ENCODE measurements at regions of chr3 and their contacts with region 1.

Region 1: DNA sequence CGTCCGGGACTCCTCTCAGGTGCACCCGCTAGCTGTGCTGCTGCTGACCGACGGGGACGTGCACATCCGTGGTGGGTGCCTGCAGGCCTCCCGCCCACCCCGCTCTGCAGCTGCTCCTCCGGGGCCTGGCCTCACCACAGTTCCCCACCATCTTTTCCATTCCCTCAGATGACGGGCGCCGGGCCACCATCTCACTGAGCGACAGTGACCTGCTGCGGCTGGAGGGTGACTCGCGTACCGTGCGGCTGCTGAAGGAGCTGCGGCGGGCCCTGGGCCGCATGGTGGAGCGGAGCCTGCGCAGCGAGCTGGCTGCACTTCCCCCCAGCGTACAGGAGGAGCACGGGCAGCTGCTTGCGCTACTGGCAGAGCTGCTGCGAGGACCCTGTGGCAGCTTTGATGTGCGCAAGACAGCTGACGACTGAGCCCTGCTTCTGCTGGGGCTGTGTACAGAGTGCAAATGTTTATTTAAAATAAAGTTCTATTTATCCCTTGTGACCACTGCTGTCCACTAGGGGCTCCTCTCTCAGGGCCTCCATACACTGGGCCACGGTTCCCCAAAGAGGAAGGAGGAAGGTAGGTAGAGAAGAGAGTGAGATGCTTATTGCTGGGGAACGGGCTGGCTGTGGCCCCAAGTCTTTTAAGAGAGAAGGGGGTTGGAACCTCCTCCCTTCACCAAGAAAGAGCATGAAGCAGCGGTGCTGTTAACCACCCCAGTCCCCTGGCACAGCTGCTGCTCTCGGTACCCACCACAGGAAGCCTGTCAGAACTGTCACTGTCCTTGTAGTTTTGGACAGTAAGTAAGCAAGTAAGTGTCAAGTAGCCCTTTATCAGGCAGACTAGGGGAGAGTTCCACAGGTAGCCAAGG is 47.0 kb downstream of the DHX30 start:
- DNase-seq: no peak
- ATAC-seq: peak; percentile 34 to 48 (median 41)
- H3K4me3 ChIP-seq: no peak overlapping the region
- H3K27ac ChIP-seq: no peak overlapping the region
- H3K4me1 ChIP-seq: no peaks in the 10 kb centered on the region
- H3K27me3 ChIP-seq: no peaks in the 10 kb centered on the region
- CTCF ChIP-seq: peak in 2 of 4 donors; percentile 31 to 37
- POLR2A ChIP-seq: no peak

Region 2: DNA sequence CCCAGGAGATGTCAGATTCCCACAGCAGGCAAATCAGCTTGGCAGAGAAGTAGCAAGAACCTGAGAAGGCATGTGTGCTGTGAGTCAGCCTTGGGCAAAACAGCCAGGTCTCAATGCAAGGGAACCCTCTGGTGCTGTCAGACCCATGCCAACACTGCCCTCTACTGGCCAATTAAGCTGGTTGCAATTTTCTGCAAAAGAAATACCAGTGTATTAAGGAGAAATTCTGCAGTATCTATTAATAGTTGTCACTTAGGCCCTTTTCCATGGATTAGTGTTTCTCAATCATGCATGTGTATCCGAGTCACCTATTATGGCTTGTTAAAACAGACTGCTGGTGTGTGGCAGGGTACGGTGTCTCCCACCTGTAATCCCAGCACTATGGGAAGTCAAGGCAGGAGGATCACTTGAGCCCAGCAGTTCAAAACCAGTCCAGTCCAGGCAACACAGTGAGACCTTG is 140.1 kb after region 1 on chr3:
- intact Hi-C with region 1: loop called in 1 of 2 experiments (anchors 10 kb)
- DNase-seq: peak in 2 of 3 donors; percentile 64 to 74
- ATAC-seq: peak; percentile 95 to 98 (median 97)
- H3K4me3 ChIP-seq: no peak overlapping the region
- H3K27ac ChIP-seq: no peak overlapping the region
- H3K4me1 ChIP-seq: peaks cover 0 to 11% (median 5%) of the 10 kb centered on the region in 4 donors
- H3K27me3 ChIP-seq: no peaks in the 10 kb centered on the region
- CTCF ChIP-seq: peak; percentile 88 to 93 (median 90)
- POLR2A ChIP-seq: no peak

Region 3: DNA sequence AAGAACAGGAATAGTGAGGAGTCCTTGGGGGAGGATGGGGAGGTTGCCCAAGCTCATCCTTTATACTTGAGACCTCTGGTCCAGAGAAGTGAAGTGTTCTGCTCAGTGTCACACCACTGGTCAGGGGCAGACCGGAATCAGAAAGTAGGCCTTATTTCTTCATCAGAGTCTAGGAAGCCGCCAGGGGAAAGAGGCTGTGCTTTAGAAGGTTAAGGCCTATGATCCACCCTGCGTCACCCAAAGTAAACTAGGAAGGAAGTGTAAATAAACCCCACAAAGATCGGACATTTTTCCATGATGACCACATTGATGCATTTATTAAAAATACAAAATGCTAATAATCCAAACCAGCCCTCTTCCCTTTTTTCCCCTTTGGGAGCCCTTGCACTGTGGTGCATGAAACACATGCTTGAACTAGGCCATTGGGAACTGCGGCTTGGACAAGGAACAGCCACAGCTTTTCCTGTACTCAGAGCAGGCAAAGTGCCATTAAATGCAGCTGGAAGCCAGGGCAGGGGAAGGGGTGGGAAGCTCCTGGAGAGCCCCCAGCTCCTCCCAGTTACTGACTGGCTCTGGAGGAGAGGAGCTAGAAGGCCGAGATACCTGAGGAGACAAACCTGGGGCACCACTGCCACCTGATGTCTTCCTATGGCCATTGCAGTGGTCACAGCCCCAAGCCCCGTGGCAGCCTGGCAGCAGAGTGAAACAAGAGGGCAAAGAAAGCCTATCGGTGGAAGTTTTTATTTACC is 301.3 kb after region 1 on chr3:
- intact Hi-C with region 1: loop called in 1 of 2 experiments (anchors 10 kb)
- DNase-seq: peak; percentile 76 to 80 (median 78)
- ATAC-seq: peak; percentile 99 to 100 (median 99)
- H3K4me3 ChIP-seq: no peak overlapping the region
- H3K27ac ChIP-seq: no peak overlapping the region
- H3K4me1 ChIP-seq: no peaks in the 10 kb centered on the region
- H3K27me3 ChIP-seq: no peaks in the 10 kb centered on the region
- CTCF ChIP-seq: peak; percentile 84 to 89 (median 84)
- POLR2A ChIP-seq: no peak

Measured in right lobe of liver (tissue), 6 donors.